BJ (cell line): ENCODE measurements at regions of chr20 and their contacts with region 1.

Region 1: GRCh38 chr20:17654649-17655285 is 27.3 kb downstream of the RRBP1 start:
- DNase-seq: no peak
- H3K4me3 ChIP-seq: no peak overlapping the region
- H3K27me3 ChIP-seq: no peaks in the 10 kb centered on the region
- CTCF ChIP-seq: peak; percentile 71

Region 2: DNA sequence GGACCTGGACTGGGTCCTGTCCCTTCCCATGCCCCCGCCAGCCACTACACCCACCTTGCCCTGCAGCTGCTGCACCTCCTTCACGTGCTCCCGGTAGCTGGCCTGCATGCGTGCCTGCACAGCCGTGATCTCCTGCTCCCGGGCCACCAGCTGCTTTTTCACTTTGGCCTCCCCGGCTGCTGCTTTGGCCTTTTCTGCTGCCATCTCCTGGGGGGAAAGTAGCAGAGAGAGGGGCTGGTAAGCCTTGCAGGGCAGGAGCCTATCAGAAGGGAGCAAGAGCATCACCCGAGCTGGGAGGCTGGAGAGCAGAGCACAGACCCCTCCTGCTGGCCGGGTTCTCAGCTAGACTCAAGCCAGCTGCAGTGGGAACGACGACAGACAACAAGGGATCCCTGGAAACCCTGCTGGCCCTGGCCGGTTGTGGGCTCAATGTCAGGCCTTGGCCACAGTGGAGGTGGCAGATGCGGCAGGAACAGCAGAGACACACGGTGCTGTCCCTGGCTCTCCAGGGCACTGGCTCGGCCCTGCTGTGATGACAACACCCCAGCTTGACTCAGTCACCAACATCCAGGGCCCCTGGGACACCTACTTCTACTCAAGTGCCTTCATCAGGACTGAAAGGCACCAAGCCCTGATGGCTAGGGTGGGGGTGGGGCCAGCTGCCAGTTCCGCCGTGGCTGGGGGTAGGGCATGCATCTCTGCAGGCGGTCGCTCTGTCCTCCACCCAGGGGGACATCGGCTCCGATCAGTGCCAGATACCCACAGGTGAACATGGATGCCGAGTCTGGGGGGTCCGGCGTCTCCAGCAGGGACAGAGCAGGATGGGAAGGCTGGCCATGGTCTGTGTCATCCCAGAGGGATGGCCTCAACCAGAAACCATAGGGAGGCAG is 18.0 kb before region 1 on chr20:
- CTCF ChIA-PET with region 1: interaction called, 10 read pairs
- POLR2A ChIA-PET with region 1: no interaction called
- DNase-seq: no peak
- H3K4me3 ChIP-seq: no peak overlapping the region
- H3K27me3 ChIP-seq: no peaks in the 10 kb centered on the region
- CTCF ChIP-seq: 0 out of 2 replicates have a peak, but pooled peaks have one; percentile 6

Region 3: GRCh38 chr20:17958373-17959256 is 303.8 kb after region 1 on chr20:
- CTCF ChIA-PET with region 1: no interaction called
- POLR2A ChIA-PET with region 1: interaction called, 10 read pairs
- DNase-seq: no peak
- H3K4me3 ChIP-seq: no peak overlapping the region
- H3K27me3 ChIP-seq: no peaks in the 10 kb centered on the region
- CTCF ChIP-seq: peak; percentile 36; the same call in 1 of the 2 replicates